Aorta (tissue), 5 donors: ENCODE measurements at regions of chr19 and their contacts with region 1.

Region 1: DNA sequence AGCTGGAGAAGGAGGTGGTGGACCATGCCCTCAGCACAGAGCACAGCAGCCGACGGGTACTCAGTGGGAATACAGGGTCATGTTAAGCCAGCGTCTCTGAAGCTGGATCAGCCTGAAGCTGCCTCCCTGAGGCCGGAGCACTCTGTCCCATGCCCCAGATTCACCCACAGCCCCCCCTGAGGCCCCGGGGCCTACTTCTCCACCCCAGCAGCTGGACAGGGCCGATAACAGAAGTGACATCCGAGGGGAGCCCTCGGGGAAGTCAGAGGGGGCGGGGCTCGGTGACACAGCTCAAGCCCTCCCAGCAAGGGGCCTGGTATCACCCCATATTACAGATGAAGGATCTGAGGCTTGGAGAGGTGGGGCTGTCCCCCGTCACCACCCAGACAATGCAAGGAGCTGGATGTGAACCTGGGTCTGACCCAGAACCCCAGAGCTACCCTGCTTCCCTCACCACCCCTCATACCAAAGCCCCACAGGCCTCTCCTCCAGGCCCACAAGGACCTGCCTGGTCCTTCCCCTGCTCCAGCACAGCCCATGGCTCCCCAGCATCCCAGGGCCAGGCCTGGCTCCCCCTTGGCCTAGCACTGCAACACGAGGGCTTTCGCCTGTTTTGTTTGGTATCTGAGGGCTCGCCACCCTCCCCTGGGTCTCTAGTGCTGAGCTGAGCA is 5.7 kb downstream of the R3HDM4 start:
- DNase-seq: no peak
- ATAC-seq: no peak
- H3K4me3 ChIP-seq: no peak overlapping the region
- H3K27ac ChIP-seq: no peak overlapping the region
- H3K4me1 ChIP-seq: no peaks in the 10 kb centered on the region
- H3K27me3 ChIP-seq: no peaks in the 10 kb centered on the region

Region 2: GRCh38 chr19:869245-870177 is 37.8 kb before region 1 on chr19:
- intact Hi-C with region 1: loop called in 1 of 2 experiments (anchors 5 kb)
- DNase-seq: peak; percentile 89 to 92
- ATAC-seq: peak; percentile 77
- H3K4me3 ChIP-seq: no peak overlapping the region
- H3K27ac ChIP-seq: peak overlapping the region in 1 of 2 donors; percentile 14
- H3K4me1 ChIP-seq: no peaks in the 10 kb centered on the region
- H3K27me3 ChIP-seq: no peaks in the 10 kb centered on the region

Region 3: GRCh38 chr19:1026189-1027019 is 119.1 kb after region 1 on chr19 and contains the start of gene CNN2:
- intact Hi-C with region 1: no loop called
- DNase-seq: peak; percentile 89 to 95
- ATAC-seq: peak; percentile 87
- H3K4me3 ChIP-seq: peak within 1 kb of the TSS; percentile 98
- H3K27ac ChIP-seq: peak within 1 kb of the TSS; percentile 99 to 100
- H3K4me1 ChIP-seq: no peaks in the 10 kb centered on the region
- H3K27me3 ChIP-seq: no peaks in the 10 kb centered on the region
- total RNA-seq, gene CNN2: 142 to 185 TPM